A549 (cell line): ENCODE measurements at regions of chr9 and their contacts with region 1.

Region 1: DNA sequence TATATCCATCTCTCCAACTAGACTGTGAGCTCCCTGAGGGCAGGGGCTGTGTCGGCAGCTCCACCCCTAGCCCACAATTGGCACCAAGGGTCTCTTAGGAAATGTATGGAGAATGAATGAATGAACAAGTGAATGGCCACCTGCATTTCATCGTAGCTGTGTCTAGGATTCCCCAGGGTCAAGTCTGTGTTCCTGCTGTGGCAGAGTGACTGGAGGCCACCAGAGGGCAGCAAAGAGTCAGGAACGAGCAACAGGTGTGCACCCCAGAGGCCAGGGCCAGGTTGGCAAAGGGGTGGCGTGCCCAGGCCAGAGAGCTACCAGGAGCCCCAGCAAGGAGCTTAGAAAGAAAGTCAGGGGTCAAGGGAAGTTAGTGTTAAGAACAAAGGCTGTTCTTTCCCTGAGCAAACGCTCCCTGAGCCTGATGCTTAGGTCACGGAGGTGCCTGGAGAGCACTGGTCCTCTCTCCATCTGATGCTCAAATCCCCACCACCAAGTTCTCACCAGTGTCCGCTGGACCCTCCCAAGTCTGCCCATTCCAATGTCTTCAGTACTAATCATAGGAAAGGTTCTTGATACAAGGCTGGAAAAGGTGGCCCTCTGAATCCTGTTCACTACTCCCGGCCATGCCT is 160.7 kb downstream of the PAX5 start:
- DNase-seq: peak; percentile 73 to 83
- ATAC-seq: peak; percentile 81 to 97
- H3K4me3 ChIP-seq: no peak overlapping the region
- H3K27ac ChIP-seq: no peak overlapping the region
- H3K4me1 ChIP-seq: no peaks in the 10 kb centered on the region
- CTCF ChIP-seq: peak; percentile 90
- EP300 ChIP-seq: no peak
- POLR2A ChIP-seq: no peak
- RAD21 ChIP-seq: peak; percentile 97 to 98

Region 2: DNA sequence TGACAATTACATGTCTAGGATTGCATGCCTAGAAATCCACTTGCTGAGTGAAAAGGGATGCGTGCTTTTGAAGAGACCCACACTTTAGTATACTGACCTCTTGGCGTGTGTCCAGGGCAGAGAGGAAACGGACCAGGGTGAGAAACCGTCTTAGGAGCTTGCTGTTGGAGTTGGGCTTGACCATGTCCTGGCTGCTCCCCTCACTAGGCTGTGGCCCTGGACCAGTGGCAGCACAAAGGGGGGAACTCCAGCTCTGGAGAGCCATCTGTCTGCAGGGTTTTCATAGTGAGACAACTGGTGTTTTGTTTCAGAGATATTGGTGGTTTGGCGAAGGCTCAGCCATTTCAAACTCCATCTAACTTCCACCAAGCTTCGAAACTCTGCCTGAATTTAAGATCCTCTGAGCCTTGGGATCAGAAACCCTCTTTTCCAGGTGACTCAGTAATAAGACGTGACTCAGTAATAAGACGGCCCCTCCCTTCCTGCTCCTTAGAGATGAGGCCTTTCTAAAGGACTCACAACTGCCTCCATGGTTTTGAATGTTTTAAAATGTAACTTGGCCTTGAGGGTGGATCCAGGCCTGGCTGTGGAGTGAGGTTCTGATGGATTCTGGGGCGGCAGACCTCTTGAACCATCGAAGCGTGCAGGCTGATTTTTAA is 134.9 kb before region 1 on chr9:
- CTCF ChIA-PET with region 1: no interaction called
- POLR2A ChIA-PET with region 1: no interaction called
- DNase-seq: peak; percentile 27 to 56
- ATAC-seq: peak; percentile 47 to 65; a peak in 3 of 6 replicates
- H3K4me3 ChIP-seq: no peak overlapping the region
- H3K27ac ChIP-seq: no peak overlapping the region
- H3K4me1 ChIP-seq: peaks cover 6% of the 10 kb centered on the region; the same call in 2 of the 3 replicates
- CTCF ChIP-seq: no peak
- EP300 ChIP-seq: no peak
- POLR2A ChIP-seq: no peak
- RAD21 ChIP-seq: no peak

Region 3: DNA sequence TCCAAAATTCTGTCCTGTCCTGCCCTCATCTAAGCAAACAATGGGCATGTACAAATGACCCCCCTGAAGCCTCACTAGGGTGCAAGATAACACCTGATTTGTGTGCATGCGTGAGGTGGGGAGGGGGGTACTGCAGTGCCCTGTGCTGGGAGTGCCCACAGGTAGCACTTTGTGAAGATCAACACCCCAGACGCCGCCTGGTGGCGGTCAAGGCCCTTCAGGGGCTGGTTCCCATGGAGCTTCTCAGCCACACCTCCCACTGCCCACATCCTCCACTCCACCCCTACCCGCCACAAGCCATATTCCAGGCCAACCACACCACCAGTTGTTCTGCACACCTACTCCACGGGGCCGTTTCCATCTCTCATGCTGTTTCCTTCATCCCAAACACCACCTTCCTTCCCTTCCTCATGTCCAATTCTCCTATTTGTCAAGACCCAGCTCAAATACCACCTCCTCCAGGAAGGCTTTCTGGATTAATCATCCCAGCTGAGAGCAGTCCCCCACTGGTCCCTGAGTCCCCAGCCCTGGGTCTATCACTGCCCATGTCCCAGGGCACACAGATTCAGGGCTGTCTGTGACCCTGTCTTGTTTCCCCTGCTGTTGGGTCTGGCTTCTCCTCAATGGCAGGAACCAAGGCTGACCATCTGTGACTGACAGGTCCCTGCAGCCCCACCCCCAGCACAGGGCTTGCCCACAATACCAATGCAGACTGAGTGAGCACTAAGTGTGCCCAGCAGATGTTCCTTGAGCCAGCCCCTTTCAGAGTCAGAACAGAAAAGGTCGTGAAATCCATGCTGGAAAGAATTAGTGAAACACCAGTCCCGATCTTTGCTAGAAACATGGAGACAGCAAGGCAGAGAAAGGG is 17.7 kb before region 1 on chr9:
- CTCF ChIA-PET with region 1: interaction called, 80 read pairs
- POLR2A ChIA-PET with region 1: no interaction called
- DNase-seq: peak; percentile 61 to 92
- ATAC-seq: peak; percentile 91 to 97
- H3K4me3 ChIP-seq: no peak overlapping the region
- H3K27ac ChIP-seq: no peak overlapping the region
- H3K4me1 ChIP-seq: no peaks in the 10 kb centered on the region
- CTCF ChIP-seq: peak; percentile 53
- EP300 ChIP-seq: no peak
- POLR2A ChIP-seq: no peak
- RAD21 ChIP-seq: peak; percentile 52 to 53

Region 4: GRCh38 chr9:36913393-36914211 is 40.2 kb after region 1 on chr9:
- CTCF ChIA-PET with region 1: interaction called, 38 read pairs
- POLR2A ChIA-PET with region 1: no interaction called
- DNase-seq: no peak
- ATAC-seq: peak; percentile 47 to 50; a peak in 3 of 6 replicates
- H3K4me3 ChIP-seq: no peak overlapping the region
- H3K27ac ChIP-seq: no peak overlapping the region
- H3K4me1 ChIP-seq: no peaks in the 10 kb centered on the region
- CTCF ChIP-seq: no peak
- EP300 ChIP-seq: no peak
- POLR2A ChIP-seq: no peak
- RAD21 ChIP-seq: no peak

Region 5: DNA sequence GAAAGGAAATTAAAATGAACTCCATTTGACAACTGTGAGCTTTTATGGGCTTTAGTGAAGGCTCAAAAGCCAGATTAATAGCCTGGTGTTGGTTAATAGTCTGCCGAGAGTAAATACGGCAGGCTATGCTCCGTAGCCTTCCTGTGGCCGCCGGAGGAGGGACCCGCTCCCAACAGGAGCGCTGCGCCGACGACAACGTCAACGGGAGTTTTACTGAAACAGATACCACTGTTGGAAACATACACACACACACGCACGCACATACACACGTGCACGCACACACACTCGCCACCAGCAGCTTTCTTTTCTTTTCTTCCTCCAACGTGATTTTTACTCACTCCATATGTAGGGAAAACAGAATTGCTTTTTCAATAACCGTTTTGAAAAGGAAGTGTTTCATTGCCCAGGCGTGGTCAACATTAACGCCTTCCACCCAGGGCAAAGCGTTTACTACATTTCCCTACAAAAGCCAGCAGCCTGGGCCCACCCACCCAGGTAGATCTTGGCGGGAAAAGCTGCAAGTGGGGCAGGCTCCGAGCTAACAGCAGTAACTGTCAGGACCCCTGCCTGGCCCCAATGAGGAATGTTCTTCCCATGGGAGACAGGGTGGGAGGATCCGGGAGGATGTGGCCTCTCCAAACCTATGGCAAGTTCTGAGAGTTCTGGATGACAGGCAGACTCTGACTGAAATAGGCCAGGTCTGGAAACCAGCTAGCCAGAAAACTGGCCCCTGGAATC is 88.4 kb after region 1 on chr9:
- CTCF ChIA-PET with region 1: interaction called, 20 read pairs
- POLR2A ChIA-PET with region 1: no interaction called
- DNase-seq: no peak
- ATAC-seq: no peak
- H3K4me3 ChIP-seq: no peak overlapping the region
- H3K27ac ChIP-seq: no peak overlapping the region
- H3K4me1 ChIP-seq: no peaks in the 10 kb centered on the region
- CTCF ChIP-seq: no peak
- EP300 ChIP-seq: no peak
- POLR2A ChIP-seq: no peak
- RAD21 ChIP-seq: no peak

Region 6: DNA sequence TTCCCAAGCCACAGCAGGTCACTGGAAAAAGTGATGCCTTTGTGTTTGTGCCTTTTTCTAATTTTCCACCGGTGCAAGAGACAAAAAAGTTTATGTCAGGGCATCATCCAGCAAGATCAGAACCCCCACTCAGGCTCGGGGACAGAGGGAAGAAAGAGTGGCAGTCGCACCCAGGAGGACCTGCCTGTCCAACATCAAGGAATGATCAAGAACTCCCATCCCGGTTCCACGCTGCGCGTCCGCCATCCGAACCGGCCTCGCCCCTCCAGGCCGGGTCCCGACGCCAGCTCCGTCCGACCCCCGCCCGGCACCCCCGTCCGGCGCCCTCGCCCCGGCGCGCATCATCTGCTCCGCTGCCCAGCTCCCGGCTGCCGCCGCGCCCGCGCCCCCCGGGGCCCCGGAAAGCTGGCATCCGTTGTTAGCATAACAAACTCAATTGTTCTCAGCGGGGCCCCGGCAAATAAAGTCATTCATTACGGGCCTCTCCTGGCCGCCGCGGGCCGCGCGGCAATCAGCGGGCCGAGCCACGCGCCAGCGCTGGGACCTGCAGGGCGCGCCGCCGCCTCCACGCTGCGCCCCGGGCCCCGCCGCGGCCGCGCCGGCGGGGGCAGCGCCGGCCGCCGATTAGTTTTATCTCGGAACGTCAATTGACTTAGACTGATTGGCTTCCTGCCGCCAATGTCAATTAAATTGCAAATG is 112.6 kb after region 1 on chr9:
- CTCF ChIA-PET with region 1: interaction called, 143 read pairs
- POLR2A ChIA-PET with region 1: no interaction called
- DNase-seq: no peak
- ATAC-seq: no peak
- H3K4me3 ChIP-seq: no peak overlapping the region; the same call in 2 of the 3 replicates
- H3K27ac ChIP-seq: no peak overlapping the region
- H3K4me1 ChIP-seq: no peaks in the 10 kb centered on the region
- CTCF ChIP-seq: no peak
- EP300 ChIP-seq: no peak
- POLR2A ChIP-seq: no peak
- RAD21 ChIP-seq: no peak

Region 7: GRCh38 chr9:37040508-37041127 is 167.3 kb after region 1 on chr9:
- CTCF ChIA-PET with region 1: interaction called, 10 read pairs
- POLR2A ChIA-PET with region 1: no interaction called
- DNase-seq: no peak
- ATAC-seq: no peak
- H3K4me3 ChIP-seq: no peak overlapping the region
- H3K27ac ChIP-seq: no peak overlapping the region
- H3K4me1 ChIP-seq: peaks cover 9% of the 10 kb centered on the region
- CTCF ChIP-seq: no peak
- EP300 ChIP-seq: no peak
- POLR2A ChIP-seq: no peak
- RAD21 ChIP-seq: no peak

Region 8: GRCh38 chr9:37415011-37415719 is 541.8 kb after region 1 on chr9:
- CTCF ChIA-PET with region 1: interaction called, 11 read pairs
- POLR2A ChIA-PET with region 1: no interaction called
- DNase-seq: peak; percentile 80 to 87
- ATAC-seq: peak; percentile 67 to 86
- H3K4me3 ChIP-seq: no peak overlapping the region
- H3K27ac ChIP-seq: peak overlapping the region; percentile 73 to 77
- H3K4me1 ChIP-seq: peaks cover 35% of the 10 kb centered on the region
- CTCF ChIP-seq: peak; percentile 73
- EP300 ChIP-seq: no peak
- POLR2A ChIP-seq: no peak
- RAD21 ChIP-seq: peak; percentile 67 to 69